ENCODE measurements at regions of chr5 and their contacts with region 1.

Region 1: DNA sequence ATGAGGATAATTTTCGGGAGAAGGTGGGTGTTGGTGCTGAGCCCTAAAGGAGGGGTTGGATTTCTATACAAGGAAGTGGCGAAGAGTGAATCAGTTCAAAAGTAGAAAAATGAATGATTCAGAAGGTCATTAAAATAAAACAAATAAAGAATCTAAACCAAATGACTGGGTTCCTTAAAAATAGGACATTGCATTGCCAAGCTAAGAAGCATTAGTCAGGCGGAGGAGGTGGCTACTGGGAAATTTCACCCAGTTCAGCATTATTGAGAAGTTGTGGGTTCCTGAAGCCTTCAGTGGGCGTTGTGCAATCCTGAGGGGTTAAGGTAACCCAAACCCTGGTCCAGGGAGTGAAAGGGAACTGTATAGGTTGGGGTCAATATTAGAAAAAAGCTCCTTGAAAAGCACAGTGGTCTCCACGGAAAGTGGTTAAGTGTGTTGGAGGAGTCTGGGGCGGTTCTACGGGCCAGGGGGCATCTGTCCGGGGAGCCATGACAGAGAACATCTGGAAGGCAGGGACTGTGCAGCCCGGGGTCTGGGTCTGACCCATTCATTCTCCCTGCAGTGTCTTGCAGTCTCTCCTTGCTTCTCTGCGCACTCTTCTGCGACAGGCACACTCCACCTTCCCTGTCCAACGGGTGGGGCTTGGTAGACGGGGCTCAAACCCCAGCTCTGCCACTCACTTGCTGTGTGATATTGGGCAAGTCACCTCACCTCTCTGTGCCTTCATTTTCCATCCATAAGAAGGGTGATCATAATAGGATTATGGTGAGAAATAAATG is 27.6 kb upstream of the DUSP1 start:
- DNase-seq: no peak
- H3K4me3 Mint-ChIP-seq: no peak overlapping the region
- H3K27ac Mint-ChIP-seq: no peak overlapping the region
- H3K4me1 Mint-ChIP-seq: peaks cover 8% of the 10 kb centered on the region
- H3K27me3 Mint-ChIP-seq: no peaks in the 10 kb centered on the region

Region 2: GRCh38 chr5:172820046-172820767 is 21.6 kb after region 1 on chr5:
- intact Hi-C with region 1: loop called (anchors 1 kb)
- DNase-seq: no peak
- H3K4me3 Mint-ChIP-seq: no peak overlapping the region
- H3K27ac Mint-ChIP-seq: no peak overlapping the region
- H3K4me1 Mint-ChIP-seq: peaks cover 6% of the 10 kb centered on the region
- H3K27me3 Mint-ChIP-seq: no peaks in the 10 kb centered on the region